Transverse colon (tissue), 4 donors: ENCODE measurements at regions of chr17 and their contacts with region 1.

Region 1: DNA sequence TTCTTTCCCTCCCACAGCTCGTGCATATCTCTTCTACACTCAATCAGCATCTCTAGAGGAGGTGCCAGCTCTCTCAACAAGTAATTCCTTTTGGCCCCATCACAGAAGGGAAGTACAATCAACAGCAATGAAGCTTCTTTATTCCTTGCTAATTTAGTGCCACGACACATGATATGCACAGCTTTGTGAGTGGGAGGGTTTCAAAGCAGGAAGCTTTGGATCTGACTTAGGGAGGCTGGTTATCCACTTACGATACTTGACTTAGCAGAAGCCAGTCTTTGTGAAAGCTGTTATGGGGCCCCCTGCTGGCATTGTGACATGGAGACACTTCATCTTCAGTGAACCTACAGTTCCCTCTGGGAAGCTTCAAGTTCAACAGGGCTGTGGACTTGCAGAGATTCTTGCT is 81.0 kb downstream of the TMEM100 start:
- DNase-seq: peak; percentile 57
- H3K4me3 ChIP-seq: no peak overlapping the region
- H3K27ac ChIP-seq: no peak overlapping the region
- H3K4me1 ChIP-seq: no peaks in the 10 kb centered on the region
- H3K27me3 ChIP-seq: no peaks in the 10 kb centered on the region
- CTCF ChIP-seq: peak; percentile 13 to 59 (median 43)
- EP300 ChIP-seq: no peak
- POLR2A ChIP-seq: no peak

Region 2: DNA sequence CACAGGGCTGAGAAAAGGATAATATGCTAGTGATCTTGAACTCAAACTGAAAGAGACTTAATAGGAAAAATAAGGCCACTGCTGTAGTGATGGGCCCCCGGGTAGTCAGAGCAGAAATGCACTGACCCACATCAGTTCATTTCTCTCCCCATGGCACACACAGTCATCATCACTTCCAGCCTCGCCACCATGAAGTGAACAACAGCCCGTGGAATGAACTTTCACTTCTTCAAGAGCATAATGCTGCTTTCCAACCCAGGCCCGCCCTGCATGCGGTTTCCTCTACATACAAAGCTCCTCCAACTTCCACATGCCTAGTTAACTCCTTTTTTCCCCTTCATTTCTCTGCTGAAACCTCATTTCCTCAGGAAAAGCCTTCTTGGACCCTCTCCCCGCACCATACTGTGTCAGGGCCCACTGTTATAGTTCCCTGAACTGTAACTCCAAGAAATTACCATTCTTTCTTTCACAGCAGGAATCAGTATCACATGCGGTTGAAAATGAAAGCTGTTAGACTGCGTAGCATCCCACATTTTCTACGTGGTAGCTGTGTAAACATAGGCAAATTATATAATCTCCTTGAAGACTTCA is 64.6 kb before region 1 on chr17:
- in situ Hi-C with region 1: no loop called
- intact Hi-C with region 1: loop called (anchors 2 kb)
- DNase-seq: peak; percentile 36
- H3K4me3 ChIP-seq: peak overlapping the region in 3 of 4 donors; percentile 9 to 45 (median 15)
- H3K27ac ChIP-seq: peak overlapping the region; percentile 72 to 86 (median 79)
- H3K4me1 ChIP-seq: peaks cover 3 to 21% (median 6%) of the 10 kb centered on the region in 4 donors
- H3K27me3 ChIP-seq: no peaks in the 10 kb centered on the region
- CTCF ChIP-seq: no peak
- EP300 ChIP-seq: no peak
- POLR2A ChIP-seq: no peak

Region 3: DNA sequence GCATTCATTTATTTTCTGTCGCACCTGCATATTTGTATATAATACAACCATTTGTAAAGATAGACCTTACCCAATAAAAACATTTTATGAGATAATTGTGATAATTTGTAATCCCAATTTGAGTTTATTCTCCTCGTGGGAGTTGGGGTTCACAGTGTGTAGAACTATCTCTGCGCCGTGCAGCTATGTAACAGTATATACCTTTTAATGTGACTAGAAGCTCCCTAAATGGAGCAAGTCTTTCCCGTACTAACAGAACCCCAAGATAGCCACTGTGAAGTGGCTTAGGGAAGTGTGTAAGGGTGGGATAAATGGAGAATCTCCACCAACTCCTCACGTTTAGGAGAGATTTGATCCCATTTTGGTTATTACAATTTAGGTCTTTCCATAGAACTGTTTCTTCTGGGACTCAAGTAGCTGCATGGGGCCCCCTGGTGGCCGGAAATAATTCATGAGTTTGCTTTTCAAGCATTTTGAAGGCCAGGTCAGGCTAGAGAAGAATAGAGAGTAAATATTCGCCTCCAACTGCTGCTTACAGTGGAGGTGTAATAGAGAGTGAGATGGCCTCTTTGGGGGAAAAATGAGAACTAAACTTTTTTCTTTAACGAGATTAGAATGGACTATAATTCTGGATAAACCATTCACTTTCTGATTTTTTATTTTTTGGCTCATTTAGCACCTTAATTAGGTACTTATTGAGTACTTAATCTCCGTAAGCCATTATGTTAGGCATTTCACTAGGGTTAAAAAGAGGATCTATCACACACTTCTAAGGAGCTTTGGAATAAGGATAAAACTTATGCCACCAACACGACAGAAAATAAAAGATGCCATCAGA is 76.4 kb after region 1 on chr17:
- in situ Hi-C with region 1: no loop called
- intact Hi-C with region 1: loop called (anchors 10 kb)
- DNase-seq: peak; percentile 78
- H3K4me3 ChIP-seq: no peak overlapping the region
- H3K27ac ChIP-seq: no peak overlapping the region
- H3K4me1 ChIP-seq: peaks cover 0 to 7% (median 1%) of the 10 kb centered on the region in 4 donors
- H3K27me3 ChIP-seq: peaks cover 6% of the 10 kb centered on the region
- CTCF ChIP-seq: peak; percentile 64 to 81 (median 78)
- EP300 ChIP-seq: no peak
- POLR2A ChIP-seq: no peak